Esophagus muscularis mucosa (tissue), 4 donors: ENCODE measurements at regions of chr2 and their contacts with region 1.

Region 1: DNA sequence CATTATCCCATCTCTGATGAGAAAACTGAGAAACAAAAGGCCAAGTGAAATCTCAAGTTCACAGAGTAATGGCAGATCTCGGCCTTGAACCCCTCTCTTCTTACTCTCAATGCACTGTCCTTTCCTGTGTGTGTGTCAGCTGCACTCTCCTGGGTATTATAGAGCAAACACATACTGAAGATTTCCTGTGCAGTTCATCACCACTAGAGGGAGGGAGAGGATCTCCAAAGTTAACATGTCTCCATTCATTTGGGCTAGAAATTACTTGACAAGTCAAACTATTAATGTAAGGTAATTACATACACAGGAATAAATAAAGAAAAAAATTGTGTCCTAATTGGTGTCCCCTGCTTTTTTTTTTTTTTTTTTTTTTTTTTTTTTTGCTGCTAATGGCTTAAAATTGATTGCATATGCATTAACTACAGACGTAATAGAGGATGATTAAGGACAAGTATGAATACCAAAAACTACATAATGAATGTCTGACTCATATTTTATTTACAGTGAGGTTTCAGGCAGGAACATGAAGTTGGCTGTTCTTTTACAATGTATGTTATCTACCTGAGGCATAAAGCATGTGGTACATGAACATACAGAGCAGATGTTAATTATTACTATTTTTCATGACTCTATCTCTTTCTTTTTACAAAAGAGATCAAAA is 269.2 kb downstream of the NYAP2 start:
- DNase-seq: no peak
- H3K4me3 ChIP-seq: no peak overlapping the region
- H3K27ac ChIP-seq: no peak overlapping the region
- H3K4me1 ChIP-seq: peaks cover 0 to 11% (median 3%) of the 10 kb centered on the region in 4 donors
- H3K27me3 ChIP-seq: no peaks in the 10 kb centered on the region
- CTCF ChIP-seq: peak; percentile 64 to 79 (median 65)
- EP300 ChIP-seq: no peak
- POLR2A ChIP-seq: no peak

Region 2: DNA sequence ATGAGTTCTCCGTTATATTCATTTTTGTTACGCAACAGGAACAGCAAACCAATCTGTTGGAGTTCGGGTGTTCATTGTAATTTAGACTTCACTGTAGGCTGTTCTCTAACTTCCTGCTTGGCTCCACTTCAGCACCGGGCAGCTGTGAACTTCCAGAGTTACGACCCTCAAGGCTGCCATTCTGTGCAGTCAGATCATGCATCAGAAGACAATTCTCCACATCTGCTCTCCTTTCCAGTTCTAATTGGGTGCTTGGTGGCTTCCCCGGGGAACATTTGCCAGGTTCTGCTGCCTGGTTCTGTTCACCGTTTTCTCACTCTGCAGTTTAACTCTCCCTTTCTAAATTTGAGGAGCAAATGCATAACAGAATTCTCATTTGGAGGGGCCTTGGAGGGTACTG is 31.5 kb before region 1 on chr2:
- intact Hi-C with region 1: no loop called
- DNase-seq: no peak
- H3K4me3 ChIP-seq: no peak overlapping the region
- H3K27ac ChIP-seq: no peak overlapping the region
- H3K4me1 ChIP-seq: no peaks in the 10 kb centered on the region
- H3K27me3 ChIP-seq: no peaks in the 10 kb centered on the region
- CTCF ChIP-seq: no peak
- EP300 ChIP-seq: no peak
- POLR2A ChIP-seq: no peak

Region 3: DNA sequence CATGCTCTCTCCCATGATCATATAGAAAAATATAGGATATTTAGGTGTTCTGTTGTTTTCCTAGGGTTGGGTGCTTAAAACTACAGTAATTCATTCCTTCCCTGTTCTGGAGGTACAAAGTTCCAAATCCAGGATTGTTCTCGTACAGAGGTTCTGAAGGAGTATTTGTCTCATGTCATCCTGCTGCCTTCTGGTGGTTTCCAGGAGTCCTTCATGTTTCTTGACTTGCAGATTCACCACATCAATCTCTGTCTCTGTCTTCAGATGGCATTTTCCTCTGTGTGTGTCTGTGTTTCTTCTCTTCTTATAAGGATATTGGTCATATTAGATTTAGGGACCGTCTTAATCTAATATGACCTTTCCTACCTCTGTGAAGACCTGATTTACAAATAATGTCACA is 128.7 kb after region 1 on chr2:
- intact Hi-C with region 1: loop called (anchors 5 kb)
- DNase-seq: no peak
- H3K4me3 ChIP-seq: no peak overlapping the region
- H3K27ac ChIP-seq: no peak overlapping the region
- H3K4me1 ChIP-seq: peaks cover 0 to 6% (median 0%) of the 10 kb centered on the region in 4 donors
- H3K27me3 ChIP-seq: no peaks in the 10 kb centered on the region
- CTCF ChIP-seq: peak in 2 of 3 experiments; percentile 32 to 42
- EP300 ChIP-seq: no peak
- POLR2A ChIP-seq: no peak